CD8-positive, alpha-beta T cell (primary cell): ENCODE measurements at regions of chr12 and their contacts with region 1.

Region 1: DNA sequence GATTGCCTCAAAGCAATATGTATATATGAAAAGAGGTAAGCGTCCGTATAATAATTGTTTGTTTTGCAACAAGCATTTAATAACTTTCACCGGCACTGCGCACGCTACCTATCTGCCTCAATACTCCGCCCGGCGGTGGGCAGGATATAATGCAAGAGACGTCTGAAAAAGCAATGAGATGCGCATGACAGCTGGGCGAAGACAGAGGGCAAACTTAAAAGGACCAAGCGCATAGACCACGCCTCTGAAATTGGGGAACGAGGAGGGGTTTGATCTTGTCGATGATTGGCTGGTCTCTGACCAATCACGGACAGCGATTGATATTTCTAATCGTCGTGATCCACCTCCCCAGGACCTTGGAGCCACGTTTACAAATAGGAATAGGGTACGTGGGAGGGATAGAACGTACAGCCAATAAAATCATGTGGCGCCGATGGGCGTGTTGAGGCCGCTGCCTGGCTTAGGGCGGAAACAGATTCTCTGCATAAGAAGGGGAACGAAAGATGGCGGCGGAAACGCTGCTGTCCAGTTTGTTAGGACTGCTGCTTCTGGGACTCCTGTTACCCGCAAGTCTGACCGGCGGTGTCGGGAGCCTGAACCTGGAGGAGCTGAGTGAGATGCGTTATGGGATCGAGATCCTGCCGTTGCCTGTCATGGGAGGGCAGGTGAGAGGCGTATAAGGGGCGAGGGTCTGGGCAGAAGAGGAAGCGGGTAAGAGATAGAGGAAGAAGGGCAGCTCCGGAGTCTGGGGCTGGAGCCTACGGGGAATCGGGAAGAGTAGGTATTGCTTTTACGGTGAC is at the start of gene OS9:
- DNase-seq: peak; percentile 89 to 100 (median 92)
- ATAC-seq: peak; percentile 92
- H3K4me3 ChIP-seq: peak within 1 kb of the TSS; percentile 89 to 95
- H3K4me3 Mint-ChIP-seq: no peak within 1 kb of the TSS
- H3K27ac ChIP-seq: peak within 1 kb of the TSS; percentile 77 to 81
- H3K27ac Mint-ChIP-seq: no peak within 1 kb of the TSS
- H3K4me1 ChIP-seq: peaks cover 17% of the 10 kb centered on the region
- H3K4me1 Mint-ChIP-seq: peaks cover 18% of the 10 kb centered on the region
- H3K27me3 ChIP-seq: no peaks in the 10 kb centered on the region
- H3K27me3 Mint-ChIP-seq: peaks cover 5% of the 10 kb centered on the region
- CTCF ChIP-seq: peak; percentile 90
- total RNA-seq, gene OS9: 105 to 119 TPM

Region 2: GRCh38 chr12:57546438-57547383 is 147.1 kb before region 1 on chr12 and contains the start of gene DCTN2:
- CTCF ChIA-PET with region 1: no interaction called
- POLR2A ChIA-PET with region 1: no interaction called
- intact Hi-C with region 1: loop called in 1 of 2 experiments (anchors 2 kb)
- DNase-seq: peak; percentile 79 to 97 (median 89)
- ATAC-seq: peak; percentile 94
- H3K4me3 ChIP-seq: peak within 1 kb of the TSS; percentile 63 to 94
- H3K4me3 Mint-ChIP-seq: peak within 1 kb of the TSS; percentile 92
- H3K27ac ChIP-seq: peak within 1 kb of the TSS; percentile 63 to 87
- H3K27ac Mint-ChIP-seq: peak within 1 kb of the TSS; percentile 91
- H3K4me1 ChIP-seq: peaks cover 27% of the 10 kb centered on the region
- H3K4me1 Mint-ChIP-seq: peaks cover 57% of the 10 kb centered on the region
- H3K27me3 ChIP-seq: no peaks in the 10 kb centered on the region
- H3K27me3 Mint-ChIP-seq: no peaks in the 10 kb centered on the region
- CTCF ChIP-seq: no peak
- total RNA-seq, gene DCTN2: 39.2 to 43.3 TPM

Region 3: DNA sequence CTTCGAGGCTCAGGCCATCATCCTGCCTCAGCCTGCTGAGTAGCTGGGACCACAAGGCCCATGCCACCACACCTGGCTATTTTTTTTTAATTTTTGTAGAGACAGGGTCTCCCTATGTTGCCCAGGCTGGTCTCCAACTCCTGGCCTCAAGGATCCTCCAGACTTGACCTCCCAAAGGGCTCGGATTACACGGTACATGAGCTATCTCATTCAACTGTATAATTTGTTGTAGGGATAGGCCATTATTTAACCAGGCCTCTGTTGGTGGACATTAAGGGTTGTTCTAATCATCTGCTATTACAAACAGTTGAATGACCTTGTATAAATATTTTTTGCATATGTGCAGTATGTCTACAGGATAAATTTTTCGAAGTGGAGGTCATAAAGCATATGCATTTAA is 135.0 kb before region 1 on chr12:
- CTCF ChIA-PET with region 1: no interaction called
- POLR2A ChIA-PET with region 1: no interaction called
- intact Hi-C with region 1: no loop called
- DNase-seq: no peak
- ATAC-seq: no peak
- H3K4me3 ChIP-seq: no peak overlapping the region
- H3K4me3 Mint-ChIP-seq: no peak overlapping the region
- H3K27ac ChIP-seq: no peak overlapping the region
- H3K27ac Mint-ChIP-seq: no peak overlapping the region
- H3K4me1 ChIP-seq: no peaks in the 10 kb centered on the region
- H3K4me1 Mint-ChIP-seq: no peaks in the 10 kb centered on the region
- H3K27me3 ChIP-seq: no peaks in the 10 kb centered on the region
- H3K27me3 Mint-ChIP-seq: no peaks in the 10 kb centered on the region
- CTCF ChIP-seq: no peak

Region 4: GRCh38 chr12:57590536-57591479 is 103.1 kb before region 1 on chr12 and contains the start of gene PIP4K2C:
- CTCF ChIA-PET with region 1: no interaction called
- POLR2A ChIA-PET with region 1: interaction called, 3 read pairs
- intact Hi-C with region 1: loop called in 1 of 2 experiments (anchors 2 kb)
- DNase-seq: peak; percentile 28 to 93 (median 74)
- ATAC-seq: peak; percentile 87
- H3K4me3 ChIP-seq: peak within 1 kb of the TSS; percentile 61 to 97
- H3K4me3 Mint-ChIP-seq: peak within 1 kb of the TSS; percentile 85
- H3K27ac ChIP-seq: peak within 1 kb of the TSS; percentile 55 to 79
- H3K27ac Mint-ChIP-seq: peak within 1 kb of the TSS; percentile 83
- H3K4me1 ChIP-seq: peaks cover 23% of the 10 kb centered on the region
- H3K4me1 Mint-ChIP-seq: peaks cover 32% of the 10 kb centered on the region
- H3K27me3 ChIP-seq: peaks cover 0 to 5% of the 10 kb centered on the region in 2 experiments
- H3K27me3 Mint-ChIP-seq: no peaks in the 10 kb centered on the region
- CTCF ChIP-seq: no peak
- total RNA-seq, gene PIP4K2C: 16.4 to 20.1 TPM

Region 5: DNA sequence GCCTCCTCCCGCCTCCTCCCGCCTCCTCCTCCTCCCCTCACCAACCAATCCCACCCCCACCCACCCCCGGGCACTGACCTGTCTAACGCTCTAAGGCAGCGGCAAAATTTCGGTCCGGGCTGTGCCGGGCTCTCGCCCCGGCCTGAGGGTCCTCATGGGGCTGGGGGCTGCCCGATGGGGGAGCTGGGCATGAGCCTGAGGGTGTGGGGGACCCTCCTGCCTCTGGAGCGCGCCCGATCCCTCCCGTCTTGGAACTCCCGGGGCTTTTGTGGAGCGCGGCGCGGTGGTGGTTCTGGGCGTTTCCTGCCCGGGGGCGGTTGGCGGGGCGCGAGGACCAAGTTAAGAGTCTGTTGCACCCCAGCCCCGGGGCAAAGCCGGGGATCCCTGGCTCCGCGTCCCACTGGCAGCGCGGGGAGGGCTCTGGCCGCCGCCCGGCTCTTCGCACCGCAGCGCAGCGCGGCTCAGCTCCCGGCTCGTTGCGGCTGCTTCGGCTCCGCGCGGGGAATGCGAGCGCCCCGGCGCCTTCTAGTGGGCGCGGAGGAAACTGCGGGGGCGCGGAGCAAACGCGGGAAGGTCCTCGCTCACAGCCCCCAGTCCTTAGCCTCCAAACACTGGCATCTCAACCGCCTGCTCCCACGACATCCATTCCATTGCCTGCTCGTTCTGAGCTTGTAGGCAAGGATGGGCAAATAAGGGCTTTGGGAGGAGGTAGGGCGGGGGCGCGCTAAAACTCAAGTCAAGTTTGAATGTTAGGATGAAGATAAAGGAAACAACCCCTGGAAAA is 61.0 kb before region 1 on chr12 and contains the start of gene B4GALNT1:
- CTCF ChIA-PET with region 1: interaction called, 3 read pairs
- POLR2A ChIA-PET with region 1: no interaction called
- intact Hi-C with region 1: loop called (anchors 1 to 5 kb)
- DNase-seq: peak; percentile 39 to 79 (median 55)
- ATAC-seq: peak; percentile 92
- H3K4me3 ChIP-seq: peak within 1 kb of the TSS; percentile 50 to 57
- H3K4me3 Mint-ChIP-seq: peak within 1 kb of the TSS; percentile 71
- H3K27ac ChIP-seq: no peak within 1 kb of the TSS
- H3K27ac Mint-ChIP-seq: no peak within 1 kb of the TSS
- H3K4me1 ChIP-seq: peaks cover 13% of the 10 kb centered on the region
- H3K4me1 Mint-ChIP-seq: peaks cover 12% of the 10 kb centered on the region
- H3K27me3 ChIP-seq: peaks cover 10 to 28% of the 10 kb centered on the region in 2 experiments
- H3K27me3 Mint-ChIP-seq: peaks cover 53% of the 10 kb centered on the region
- CTCF ChIP-seq: peak; percentile 86
- total RNA-seq, gene B4GALNT1: not detected

Region 6: DNA sequence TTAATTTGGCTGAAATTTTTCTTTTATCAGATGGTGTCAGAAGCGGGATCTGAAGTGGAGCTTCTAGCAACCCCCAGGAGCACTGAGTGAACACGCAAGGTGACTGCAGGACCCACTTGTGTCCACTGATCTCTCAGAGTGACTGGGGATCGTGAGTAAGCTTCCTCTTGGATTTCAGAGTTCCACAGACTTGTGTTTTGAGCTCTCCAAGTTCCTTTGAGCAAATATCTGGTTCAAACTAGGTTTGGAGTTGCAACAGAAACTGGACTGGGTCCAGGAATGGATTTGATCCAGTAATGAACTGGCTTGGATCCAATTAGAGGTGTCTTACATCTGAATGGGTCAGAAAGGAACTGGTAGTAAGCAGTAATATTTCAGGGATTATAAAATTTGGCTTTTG is 36.1 kb before region 1 on chr12:
- CTCF ChIA-PET with region 1: no interaction called
- POLR2A ChIA-PET with region 1: no interaction called
- intact Hi-C with region 1: no loop called
- DNase-seq: no peak
- ATAC-seq: no peak
- H3K4me3 ChIP-seq: no peak overlapping the region
- H3K4me3 Mint-ChIP-seq: no peak overlapping the region
- H3K27ac ChIP-seq: no peak overlapping the region
- H3K27ac Mint-ChIP-seq: no peak overlapping the region
- H3K4me1 ChIP-seq: no peaks in the 10 kb centered on the region
- H3K4me1 Mint-ChIP-seq: no peaks in the 10 kb centered on the region
- H3K27me3 ChIP-seq: no peaks in the 10 kb centered on the region
- H3K27me3 Mint-ChIP-seq: peaks cover 10% of the 10 kb centered on the region
- CTCF ChIP-seq: no peak

Region 7: GRCh38 chr12:57941165-57941894 is 247.5 kb after region 1 on chr12 and contains the start of gene ATP23:
- CTCF ChIA-PET with region 1: no interaction called
- POLR2A ChIA-PET with region 1: no interaction called
- intact Hi-C with region 1: loop called in 1 of 2 experiments (anchors 5 kb)
- DNase-seq: peak; percentile 82 to 96 (median 92)
- ATAC-seq: peak; percentile 92
- H3K4me3 ChIP-seq: peak within 1 kb of the TSS; percentile 65 to 97
- H3K4me3 Mint-ChIP-seq: peak within 1 kb of the TSS; percentile 97
- H3K27ac ChIP-seq: peak within 1 kb of the TSS; percentile 86 to 89
- H3K27ac Mint-ChIP-seq: peak within 1 kb of the TSS; percentile 98
- H3K4me1 ChIP-seq: peaks cover 29% of the 10 kb centered on the region
- H3K4me1 Mint-ChIP-seq: peaks cover 48% of the 10 kb centered on the region
- H3K27me3 ChIP-seq: no peaks in the 10 kb centered on the region
- H3K27me3 Mint-ChIP-seq: no peaks in the 10 kb centered on the region
- CTCF ChIP-seq: no peak
- total RNA-seq, gene ATP23: 3.6 to 4.7 TPM